CD8-positive, alpha-beta T cell (primary cell): ENCODE measurements at regions of chr22 and their contacts with region 1.

Region 1: GRCh38 chr22:17862646-17863181 is 88.4 kb upstream of the BID start:
- DNase-seq: no peak
- ATAC-seq: no peak
- H3K4me3 ChIP-seq: no peak overlapping the region
- H3K4me3 Mint-ChIP-seq: no peak overlapping the region
- H3K27ac ChIP-seq: no peak overlapping the region
- H3K27ac Mint-ChIP-seq: no peak overlapping the region
- H3K4me1 ChIP-seq: no peaks in the 10 kb centered on the region
- H3K4me1 Mint-ChIP-seq: peaks cover 1% of the 10 kb centered on the region
- H3K27me3 ChIP-seq: no peaks in the 10 kb centered on the region
- H3K27me3 Mint-ChIP-seq: no peaks in the 10 kb centered on the region
- CTCF ChIP-seq: no peak

Region 2: GRCh38 chr22:17773606-17774205 is 89.0 kb before region 1 on chr22:
- CTCF ChIA-PET with region 1: no interaction called
- POLR2A ChIA-PET with region 1: no interaction called
- intact Hi-C with region 1: no loop called
- DNase-seq: peak; percentile 26 to 84 (median 68)
- ATAC-seq: peak; percentile 47
- H3K4me3 ChIP-seq: peak overlapping the region; percentile 65
- H3K4me3 Mint-ChIP-seq: peak overlapping the region; percentile 90
- H3K27ac ChIP-seq: peak overlapping the region; percentile 19 to 36
- H3K27ac Mint-ChIP-seq: peak overlapping the region; percentile 90
- H3K4me1 ChIP-seq: peaks cover 76% of the 10 kb centered on the region
- H3K4me1 Mint-ChIP-seq: peaks cover 78% of the 10 kb centered on the region
- H3K27me3 ChIP-seq: no peaks in the 10 kb centered on the region
- H3K27me3 Mint-ChIP-seq: no peaks in the 10 kb centered on the region
- CTCF ChIP-seq: no peak

Region 3: DNA sequence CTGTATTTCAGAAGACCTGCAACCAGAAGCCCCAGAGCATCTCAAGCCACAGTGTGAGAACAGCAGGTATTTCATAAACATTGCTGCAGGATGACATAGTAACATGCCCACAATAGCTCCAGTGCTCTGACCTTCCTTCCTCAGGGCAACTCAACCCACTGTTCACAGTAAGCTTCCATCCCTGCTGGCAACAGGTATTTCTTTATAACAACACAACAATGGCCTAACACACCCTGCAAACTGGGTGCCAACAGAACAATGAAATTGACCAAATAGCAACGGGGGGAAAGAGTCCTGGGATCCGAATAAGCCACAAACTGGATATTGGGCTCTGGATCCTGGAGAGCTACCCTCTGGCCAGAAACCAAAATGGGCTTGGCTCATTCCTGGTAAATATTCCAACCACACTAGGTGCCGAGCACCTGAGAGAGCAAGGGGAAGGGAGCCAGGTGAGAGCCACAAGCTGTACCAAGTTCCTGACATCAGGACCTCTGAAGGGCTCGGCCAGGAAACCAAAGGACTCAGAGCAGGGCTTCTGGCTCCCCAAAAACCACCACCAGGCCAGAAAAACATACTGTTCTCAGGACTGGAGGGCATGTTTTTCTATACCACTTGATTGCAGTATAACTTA is 62.1 kb after region 1 on chr22:
- CTCF ChIA-PET with region 1: no interaction called
- POLR2A ChIA-PET with region 1: no interaction called
- intact Hi-C with region 1: loop called in 1 of 2 experiments (anchors 2 kb)
- DNase-seq: no peak
- ATAC-seq: no peak
- H3K4me3 ChIP-seq: no peak overlapping the region
- H3K4me3 Mint-ChIP-seq: no peak overlapping the region
- H3K27ac ChIP-seq: no peak overlapping the region
- H3K27ac Mint-ChIP-seq: no peak overlapping the region
- H3K4me1 ChIP-seq: no peaks in the 10 kb centered on the region
- H3K4me1 Mint-ChIP-seq: peaks cover 11% of the 10 kb centered on the region
- H3K27me3 ChIP-seq: no peaks in the 10 kb centered on the region
- H3K27me3 Mint-ChIP-seq: no peaks in the 10 kb centered on the region
- CTCF ChIP-seq: no peak